ENCODE measurements at regions of chr20 and their contacts with region 1.

Region 1: GRCh38 chr20:35092524-35093266 is at the start of gene TRPC4AP:
- DNase-seq: peak; percentile 83 to 90 (median 87)
- ATAC-seq: peak; percentile 99
- H3K4me3 ChIP-seq: peak within 1 kb of the TSS; percentile 77
- H3K4me3 Mint-ChIP-seq: peak within 1 kb of the TSS; percentile 87 to 98 (median 90)
- H3K27ac ChIP-seq: peak within 1 kb of the TSS; percentile 89
- H3K27ac Mint-ChIP-seq: peak within 1 kb of the TSS; percentile 81 to 98 (median 94)
- H3K4me1 ChIP-seq: peaks cover 15 to 22% of the 10 kb centered on the region in 2 donors
- H3K4me1 Mint-ChIP-seq: peaks cover 27 to 54% (median 51%) of the 10 kb centered on the region in 7 donors
- H3K27me3 ChIP-seq: no peaks in the 10 kb centered on the region
- H3K27me3 Mint-ChIP-seq: no peaks in the 10 kb centered on the region
- total RNA-seq, gene TRPC4AP: 50.5 to 66.0 (median 60.6) TPM

Region 2: GRCh38 chr20:34363062-34363464 is 729.6 kb before region 1 on chr20 and contains the start of gene ITCH:
- CTCF ChIA-PET with region 1: no interaction called
- POLR2A ChIA-PET with region 1: no interaction called
- intact Hi-C with region 1: loop called in 1 of 2 experiments (anchors 2 kb)
- DNase-seq: peak; percentile 82 to 91 (median 88)
- ATAC-seq: peak; percentile 100
- H3K4me3 ChIP-seq: peak within 1 kb of the TSS; percentile 93
- H3K4me3 Mint-ChIP-seq: peak within 1 kb of the TSS; percentile 96 to 100 (median 98)
- H3K27ac ChIP-seq: peak within 1 kb of the TSS; percentile 98
- H3K27ac Mint-ChIP-seq: peak within 1 kb of the TSS; percentile 91 to 100 (median 98)
- H3K4me1 ChIP-seq: peaks cover 25 to 38% of the 10 kb centered on the region in 2 donors
- H3K4me1 Mint-ChIP-seq: peaks cover 26 to 50% (median 45%) of the 10 kb centered on the region in 7 donors
- H3K27me3 ChIP-seq: no peaks in the 10 kb centered on the region
- H3K27me3 Mint-ChIP-seq: peaks cover 0 to 3% (median 0%) of the 10 kb centered on the region in 5 donors
- total RNA-seq, gene ITCH: 50.8 to 70.4 (median 60.5) TPM

Region 3: DNA sequence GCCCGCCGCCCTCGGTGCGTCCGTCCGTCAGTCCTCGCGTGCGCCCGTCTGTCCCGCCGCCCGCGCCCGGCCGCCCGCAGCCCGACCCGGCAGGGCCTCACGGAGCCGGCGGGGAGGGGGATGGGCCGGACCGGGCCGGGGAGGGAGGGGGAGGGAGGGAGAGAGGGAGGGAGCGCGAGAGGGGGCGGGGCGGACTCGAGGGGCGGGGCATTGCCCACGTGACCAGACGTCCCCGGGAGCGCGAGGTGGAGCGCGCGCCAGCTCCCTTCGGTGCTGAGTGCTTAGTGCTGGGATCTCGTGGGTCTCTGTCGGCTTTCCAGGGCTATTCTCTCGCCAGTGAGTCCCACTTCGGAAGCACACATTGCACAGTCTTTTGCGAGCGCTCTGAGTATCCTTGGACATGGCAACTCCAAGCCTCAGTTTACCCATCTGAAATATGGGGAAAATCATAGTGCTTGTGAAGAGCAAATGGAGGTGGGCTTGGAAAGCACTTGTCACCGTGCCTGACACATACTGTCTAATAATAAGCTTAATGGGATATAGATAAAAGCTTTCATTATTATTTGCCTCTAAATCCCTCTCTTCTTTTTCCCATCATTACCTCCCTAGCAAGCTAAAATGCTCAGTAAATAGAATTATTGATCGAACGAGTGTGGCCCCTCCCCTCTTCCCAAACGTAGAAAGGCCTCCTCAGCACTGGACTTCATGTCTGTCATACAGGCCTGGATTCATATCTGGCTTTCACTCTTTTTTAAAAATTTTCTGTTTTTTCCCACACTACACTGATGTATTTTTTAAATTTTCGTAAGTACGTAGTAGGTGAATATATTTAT is 266.9 kb before region 1 on chr20 and contains the start of gene NCOA6:
- CTCF ChIA-PET with region 1: interaction called, 3 read pairs
- POLR2A ChIA-PET with region 1: no interaction called
- intact Hi-C with region 1: loop called (anchors 2 kb)
- DNase-seq: peak; percentile 56 to 86 (median 74)
- ATAC-seq: peak; percentile 90
- H3K4me3 ChIP-seq: peak within 1 kb of the TSS; percentile 78
- H3K4me3 Mint-ChIP-seq: peak within 1 kb of the TSS; percentile 83 to 100 (median 98)
- H3K27ac ChIP-seq: peak within 1 kb of the TSS; percentile 76
- H3K27ac Mint-ChIP-seq: peak within 1 kb of the TSS; percentile 85 to 95 (median 91)
- H3K4me1 ChIP-seq: peaks cover 16 to 17% of the 10 kb centered on the region in 2 donors
- H3K4me1 Mint-ChIP-seq: peaks cover 30 to 50% (median 43%) of the 10 kb centered on the region in 7 donors
- H3K27me3 ChIP-seq: no peaks in the 10 kb centered on the region
- H3K27me3 Mint-ChIP-seq: peaks cover 0 to 17% (median 0%) of the 10 kb centered on the region in 5 donors
- total RNA-seq, gene NCOA6: 23.6 to 31.9 (median 29.3) TPM

Region 4: GRCh38 chr20:34955232-34956040 is 137.3 kb before region 1 on chr20 and contains the starts of genes GSS and MYH7B:
- CTCF ChIA-PET with region 1: no interaction called
- POLR2A ChIA-PET with region 1: no interaction called
- intact Hi-C with region 1: loop called (anchors 1 kb)
- DNase-seq: peak; percentile 90 to 100 (median 94)
- ATAC-seq: peak; percentile 97
- H3K4me3 ChIP-seq: peak within 1 kb of the TSS; percentile 87
- H3K4me3 Mint-ChIP-seq: peak within 1 kb of the TSS; percentile 95 to 100 (median 98)
- H3K27ac ChIP-seq: peak within 1 kb of the TSS; percentile 77
- H3K27ac Mint-ChIP-seq: peak within 1 kb of the TSS; percentile 94 to 98 (median 97)
- H3K4me1 ChIP-seq: peaks cover 5 to 11% of the 10 kb centered on the region in 2 donors
- H3K4me1 Mint-ChIP-seq: peaks cover 11 to 40% (median 34%) of the 10 kb centered on the region in 7 donors
- H3K27me3 ChIP-seq: no peaks in the 10 kb centered on the region
- H3K27me3 Mint-ChIP-seq: no peaks in the 10 kb centered on the region
- total RNA-seq, gene GSS: 25.9 to 54.4 (median 45.8) TPM
- total RNA-seq, gene MYH7B: 0.15 to 1.0 (median 0.44) TPM

Region 5: DNA sequence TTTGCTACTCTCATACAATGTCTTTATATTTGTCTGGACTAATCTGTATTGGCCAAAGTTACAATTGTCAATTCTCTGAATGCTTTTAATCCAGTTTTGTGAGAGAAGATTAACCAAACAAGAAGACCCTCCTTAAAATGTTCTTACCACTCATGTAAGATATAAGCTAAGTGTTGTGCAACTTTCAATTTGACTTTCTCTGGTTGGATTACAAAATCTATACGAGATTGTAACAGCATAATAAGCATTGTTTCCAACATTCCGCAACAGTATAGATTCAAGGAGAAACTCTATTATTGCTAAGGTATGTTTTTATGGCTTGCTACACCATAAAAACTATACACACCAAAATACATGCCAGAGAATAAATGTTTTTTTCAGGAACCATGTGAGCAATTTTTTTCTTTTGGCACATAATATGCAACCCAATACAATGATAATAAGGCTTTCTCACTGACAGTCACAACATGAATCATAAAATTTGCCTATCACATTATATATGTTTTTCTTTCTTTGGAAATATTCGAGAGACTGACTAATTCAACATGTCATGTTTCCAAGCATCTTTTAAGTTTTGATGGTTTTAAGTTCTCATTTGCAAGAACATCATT is 12.1 kb after region 1 on chr20:
- CTCF ChIA-PET with region 1: no interaction called
- POLR2A ChIA-PET with region 1: no interaction called
- intact Hi-C with region 1: no loop called
- DNase-seq: no peak
- ATAC-seq: no peak
- H3K4me3 ChIP-seq: no peak overlapping the region
- H3K4me3 Mint-ChIP-seq: no peak overlapping the region
- H3K27ac ChIP-seq: no peak overlapping the region
- H3K27ac Mint-ChIP-seq: no peak overlapping the region
- H3K4me1 ChIP-seq: no peaks in the 10 kb centered on the region
- H3K4me1 Mint-ChIP-seq: no peaks in the 10 kb centered on the region
- H3K27me3 ChIP-seq: no peaks in the 10 kb centered on the region
- H3K27me3 Mint-ChIP-seq: peaks cover 0 to 12% (median 2%) of the 10 kb centered on the region in 5 donors

Region 6: GRCh38 chr20:35269055-35269781 is 176.5 kb after region 1 on chr20:
- CTCF ChIA-PET with region 1: interaction called, 5 read pairs
- POLR2A ChIA-PET with region 1: no interaction called
- intact Hi-C with region 1: loop called in 1 of 2 experiments (anchors 1 kb)
- DNase-seq: peak in 3 of 9 donors; percentile 37 to 54 (median 39)
- ATAC-seq: peak; percentile 77
- H3K4me3 ChIP-seq: no peak overlapping the region
- H3K4me3 Mint-ChIP-seq: no peak overlapping the region
- H3K27ac ChIP-seq: no peak overlapping the region
- H3K27ac Mint-ChIP-seq: peak overlapping the region in 2 of 9 donors; percentile 38 to 68
- H3K4me1 ChIP-seq: no peaks in the 10 kb centered on the region
- H3K4me1 Mint-ChIP-seq: peaks cover 0 to 21% (median 15%) of the 10 kb centered on the region in 7 donors
- H3K27me3 ChIP-seq: no peaks in the 10 kb centered on the region
- H3K27me3 Mint-ChIP-seq: no peaks in the 10 kb centered on the region

Region 7: GRCh38 chr20:35410613-35411012 is 317.9 kb after region 1 on chr20:
- CTCF ChIA-PET with region 1: no interaction called
- POLR2A ChIA-PET with region 1: no interaction called
- intact Hi-C with region 1: loop called in 1 of 2 experiments (anchors 5 kb)
- DNase-seq: no peak
- ATAC-seq: no peak
- H3K4me3 ChIP-seq: peak overlapping the region; percentile 79
- H3K4me3 Mint-ChIP-seq: peak overlapping the region; percentile 92 to 100 (median 98)
- H3K27ac ChIP-seq: no peak overlapping the region
- H3K27ac Mint-ChIP-seq: peak overlapping the region in 8 of 9 donors; percentile 48 to 100 (median 97)
- H3K4me1 ChIP-seq: peaks cover 8 to 9% of the 10 kb centered on the region in 2 donors
- H3K4me1 Mint-ChIP-seq: peaks cover 17 to 24% (median 22%) of the 10 kb centered on the region in 7 donors
- H3K27me3 ChIP-seq: no peaks in the 10 kb centered on the region
- H3K27me3 Mint-ChIP-seq: peaks cover 0 to 2% (median 0%) of the 10 kb centered on the region in 5 donors

Region 8: GRCh38 chr20:36573103-36573794 is 1480.6 kb after region 1 on chr20 and contains the start of gene TGIF2:
- CTCF ChIA-PET with region 1: no interaction called
- POLR2A ChIA-PET with region 1: no interaction called
- intact Hi-C with region 1: loop called in 1 of 2 experiments (anchors 10 kb)
- DNase-seq: peak; percentile 86 to 93 (median 91)
- ATAC-seq: peak; percentile 84
- H3K4me3 ChIP-seq: peak within 1 kb of the TSS; percentile 70
- H3K4me3 Mint-ChIP-seq: peak within 1 kb of the TSS; percentile 88 to 97 (median 92)
- H3K27ac ChIP-seq: peak within 1 kb of the TSS; percentile 100
- H3K27ac Mint-ChIP-seq: peak within 1 kb of the TSS; percentile 96 to 100 (median 99)
- H3K4me1 ChIP-seq: peaks cover 13 to 34% of the 10 kb centered on the region in 2 donors
- H3K4me1 Mint-ChIP-seq: peaks cover 27 to 49% (median 40%) of the 10 kb centered on the region in 7 donors
- H3K27me3 ChIP-seq: no peaks in the 10 kb centered on the region
- H3K27me3 Mint-ChIP-seq: no peaks in the 10 kb centered on the region
- total RNA-seq, gene TGIF2: 35.6 to 44.3 (median 40.7) TPM

Measured in naive thymus-derived CD4-positive, alpha-beta T cell (primary cell).